Testis (tissue), 5 donors: ENCODE measurements at regions of chr17 and their contacts with region 1.

Region 1: DNA sequence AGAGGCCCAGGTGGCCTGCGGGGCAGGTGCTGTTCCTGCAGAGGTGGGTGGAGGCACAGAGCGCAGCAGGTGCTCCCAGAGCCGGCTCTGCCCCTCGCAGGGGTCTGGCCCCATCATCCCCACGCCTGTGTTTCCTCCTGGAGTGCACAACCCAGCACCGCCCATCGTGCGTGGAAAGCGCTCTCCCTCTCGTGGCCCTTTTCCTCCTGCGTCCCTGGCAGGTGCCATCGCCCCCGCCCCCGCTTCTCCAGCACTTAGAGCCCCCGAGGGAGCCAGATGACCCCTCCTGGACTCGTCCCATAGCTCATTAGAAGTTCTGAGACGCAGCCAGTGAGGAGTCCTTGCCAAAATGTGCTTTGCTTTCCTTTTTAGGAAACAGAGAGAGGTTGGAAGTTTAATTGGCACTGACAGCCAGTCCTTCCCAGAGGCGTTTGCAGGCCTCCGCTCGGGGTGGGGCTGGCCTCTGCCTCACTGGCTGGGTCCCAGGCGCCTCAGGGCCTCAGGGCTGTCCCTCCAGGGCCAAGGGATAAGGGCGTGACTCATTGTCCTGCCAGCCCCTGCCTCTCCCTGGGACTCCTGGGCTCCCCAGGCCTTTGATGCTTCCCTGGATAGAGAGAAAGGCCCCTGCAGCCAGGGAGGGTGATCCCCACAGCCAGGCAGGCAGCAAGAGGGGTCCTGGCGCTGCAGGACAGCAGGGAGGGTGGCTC is 32.2 kb upstream of the CHMP6 start:
- DNase-seq: peak; percentile 76
- H3K4me3 ChIP-seq: no peak overlapping the region
- H3K27ac ChIP-seq: peak overlapping the region in 1 of 2 donors; percentile 11
- H3K4me1 ChIP-seq: peaks cover 15% of the 10 kb centered on the region
- H3K27me3 ChIP-seq: no peaks in the 10 kb centered on the region
- CTCF ChIP-seq: no peak
- POLR2A ChIP-seq: no peak

Region 2: GRCh38 chr17:80866147-80866793 is 93.2 kb before region 1 on chr17:
- intact Hi-C with region 1: loop called (anchors 10 kb)
- DNase-seq: peak; percentile 71
- H3K4me3 ChIP-seq: no peak overlapping the region
- H3K27ac ChIP-seq: no peak overlapping the region
- H3K4me1 ChIP-seq: no peaks in the 10 kb centered on the region
- H3K27me3 ChIP-seq: no peaks in the 10 kb centered on the region
- CTCF ChIP-seq: peak; percentile 16 to 60 (median 48)
- POLR2A ChIP-seq: no peak